ENCODE measurements at regions of chr16 and their contacts with region 1.

Region 1: DNA sequence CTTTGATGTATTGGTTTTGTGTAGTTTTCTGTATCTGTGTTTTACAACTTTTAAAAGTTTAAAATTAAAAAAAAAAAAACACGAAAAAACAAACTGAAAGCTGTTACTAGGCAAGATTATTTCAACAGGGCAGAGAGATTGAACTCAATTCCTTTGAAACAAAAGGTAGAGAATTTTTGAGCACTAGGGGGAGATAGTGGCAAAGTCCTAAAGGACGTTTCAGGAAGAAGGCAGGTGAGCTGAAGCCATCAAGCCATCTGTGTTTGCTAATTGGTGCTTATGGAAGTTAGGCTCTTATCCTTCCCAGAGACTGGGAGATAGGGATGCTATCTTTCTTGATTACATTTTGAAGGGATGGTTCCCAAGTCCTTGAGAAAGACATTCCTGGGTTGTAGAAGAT is 70.6 kb upstream of the CLEC3A start:
- DNase-seq: peak; percentile 5
- H3K4me3 Mint-ChIP-seq: no peak overlapping the region
- H3K27ac Mint-ChIP-seq: no peak overlapping the region
- H3K4me1 Mint-ChIP-seq: no peaks in the 10 kb centered on the region
- H3K27me3 Mint-ChIP-seq: peaks cover 26% of the 10 kb centered on the region
- CTCF ChIP-seq: no peak

Region 2: DNA sequence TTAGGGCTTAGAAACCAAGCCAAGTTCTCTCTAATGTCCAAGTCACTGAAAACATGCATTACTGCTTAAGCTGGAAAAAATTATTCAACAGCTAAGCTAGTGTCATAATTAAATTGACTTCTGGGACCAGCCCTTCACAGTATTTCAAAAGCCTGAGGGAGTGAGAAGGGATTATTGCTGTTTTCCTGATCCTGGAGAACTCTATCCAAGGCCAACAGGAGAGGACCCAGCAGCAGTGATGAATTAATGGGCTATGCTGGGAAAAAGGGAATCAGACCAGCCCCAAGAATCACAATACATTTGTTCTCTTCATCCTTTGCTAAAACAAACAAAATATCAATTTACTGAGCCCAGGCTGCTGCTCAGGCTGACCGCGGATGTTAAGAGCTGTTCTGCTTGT is 36.0 kb after region 1 on chr16:
- CTCF ChIA-PET with region 1: no interaction called
- intact Hi-C with region 1: no loop called
- DNase-seq: no peak
- H3K4me3 Mint-ChIP-seq: no peak overlapping the region
- H3K27ac Mint-ChIP-seq: no peak overlapping the region
- H3K4me1 Mint-ChIP-seq: no peaks in the 10 kb centered on the region
- H3K27me3 Mint-ChIP-seq: peaks cover 30% of the 10 kb centered on the region
- CTCF ChIP-seq: no peak

Region 3: GRCh38 chr16:78002915-78003538 is 51.3 kb after region 1 on chr16:
- CTCF ChIA-PET with region 1: interaction called, 3 read pairs
- intact Hi-C with region 1: loop called (anchors 5 kb)
- DNase-seq: peak; percentile 86
- H3K4me3 Mint-ChIP-seq: no peak overlapping the region
- H3K27ac Mint-ChIP-seq: no peak overlapping the region
- H3K4me1 Mint-ChIP-seq: no peaks in the 10 kb centered on the region
- H3K27me3 Mint-ChIP-seq: no peaks in the 10 kb centered on the region
- CTCF ChIP-seq: peak; percentile 81

Measured in Calu3 (cell line).